Activated T-helper 2 cell treated with anti-CD3 and anti-CD28 coated beads, Interferon-gamma antibody, Interleukin-2, Interleukin-4, amounts not matched to agents 10 μg/mL and 5 μg/mL and 100 μg/mL, durations not matched to agents 14 hours and 24 hours and 36 hours (primary cell): ENCODE measurements at regions of chr18 and their contacts with region 1.

Region 1: DNA sequence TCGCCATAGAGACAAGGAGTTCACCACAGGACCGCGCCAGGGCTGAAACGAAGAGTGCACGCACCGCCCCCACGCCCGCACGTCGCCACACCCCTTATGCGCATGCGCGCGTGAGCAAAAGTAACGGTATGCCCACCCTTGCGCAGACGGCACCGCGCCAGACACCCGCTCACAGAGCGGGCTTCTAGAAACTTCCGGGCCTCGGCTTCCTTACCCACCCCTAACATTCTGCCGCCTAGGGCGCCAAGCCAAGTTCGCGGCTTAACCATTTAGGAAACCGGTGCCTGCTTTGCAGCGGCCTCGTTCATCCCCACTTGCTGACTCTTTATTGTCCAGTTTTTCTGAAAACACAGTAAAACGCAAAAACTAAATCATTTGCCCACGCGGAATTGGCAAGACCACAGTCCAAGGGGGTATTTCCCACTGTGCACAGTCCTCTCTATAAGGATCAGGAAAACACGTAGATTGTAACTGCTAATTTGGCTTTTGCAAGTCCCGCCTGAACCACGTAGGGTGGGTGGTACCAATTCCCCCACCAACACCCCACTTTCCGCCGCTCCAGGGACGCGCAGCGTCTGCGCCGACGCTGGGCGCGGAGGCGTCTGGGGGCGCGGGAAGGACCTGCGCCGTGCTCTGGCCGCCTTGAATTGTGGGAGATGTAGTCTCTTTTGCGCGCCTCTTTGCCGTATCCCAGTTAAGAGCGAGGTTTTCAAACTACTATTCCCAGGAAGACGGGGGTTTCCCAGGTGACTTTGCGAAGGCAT is at the starts of genes FBXO15 and TIMM21:
- DNase-seq: peak; percentile 95
- H3K4me3 Mint-ChIP-seq: peak within 1 kb of the TSS; percentile 99
- H3K27ac Mint-ChIP-seq: peak within 1 kb of the TSS; percentile 98
- H3K4me1 Mint-ChIP-seq: peaks cover 45% of the 10 kb centered on the region
- H3K27me3 Mint-ChIP-seq: peaks cover 4% of the 10 kb centered on the region
- total RNA-seq, gene FBXO15: 0.91 and 1.1 TPM in 2 replicates
- total RNA-seq, gene TIMM21: 48.3 and 50.0 TPM in 2 replicates

Region 2: DNA sequence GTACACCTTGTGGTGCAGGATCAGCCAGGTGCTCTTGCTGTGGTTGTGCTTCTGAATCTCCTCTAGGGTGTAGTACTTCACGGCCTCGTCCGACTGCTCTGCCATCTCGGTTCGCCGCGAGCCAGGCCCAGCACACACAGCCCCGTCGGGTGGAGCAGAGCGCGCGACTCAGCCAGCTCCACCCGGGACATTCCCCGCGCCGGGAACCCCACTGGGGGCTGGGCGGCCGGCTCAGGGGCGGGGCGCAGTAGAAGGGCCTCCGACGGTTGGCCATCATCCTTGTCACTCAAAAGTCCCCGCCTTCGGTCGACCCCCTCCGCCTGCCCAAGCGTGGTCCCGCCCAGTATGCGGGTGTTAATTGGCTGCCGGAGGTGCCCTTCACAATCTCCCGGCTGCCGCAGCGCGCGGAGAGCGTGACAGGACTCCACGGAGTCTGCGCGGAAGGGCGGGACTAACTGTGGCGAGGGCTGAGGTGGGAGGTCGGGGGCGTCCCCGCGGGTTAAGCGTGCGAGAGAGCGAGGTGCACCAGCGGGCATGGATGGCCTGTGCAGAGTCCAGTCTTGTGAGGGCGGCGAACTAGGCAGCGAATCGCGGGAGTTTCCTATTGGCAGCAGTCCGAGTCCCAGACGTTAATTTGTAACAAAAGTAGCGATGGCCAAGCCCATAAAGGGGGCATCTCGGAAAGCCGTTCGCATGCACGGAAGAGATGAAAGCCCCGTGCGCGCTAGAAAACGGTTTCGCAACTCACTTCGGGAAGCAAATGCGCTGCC is 144.0 kb after region 1 on chr18 and contains the start of gene CYB5A:
- intact Hi-C with region 1: loop called (anchors 1 kb)
- DNase-seq: peak; percentile 93
- H3K4me3 Mint-ChIP-seq: peak within 1 kb of the TSS; percentile 94
- H3K27ac Mint-ChIP-seq: peak within 1 kb of the TSS; percentile 78
- H3K4me1 Mint-ChIP-seq: peaks cover 5% of the 10 kb centered on the region
- H3K27me3 Mint-ChIP-seq: peaks cover 15% of the 10 kb centered on the region
- total RNA-seq, gene CYB5A: 36.8 and 37.9 TPM in 2 replicates

Region 3: DNA sequence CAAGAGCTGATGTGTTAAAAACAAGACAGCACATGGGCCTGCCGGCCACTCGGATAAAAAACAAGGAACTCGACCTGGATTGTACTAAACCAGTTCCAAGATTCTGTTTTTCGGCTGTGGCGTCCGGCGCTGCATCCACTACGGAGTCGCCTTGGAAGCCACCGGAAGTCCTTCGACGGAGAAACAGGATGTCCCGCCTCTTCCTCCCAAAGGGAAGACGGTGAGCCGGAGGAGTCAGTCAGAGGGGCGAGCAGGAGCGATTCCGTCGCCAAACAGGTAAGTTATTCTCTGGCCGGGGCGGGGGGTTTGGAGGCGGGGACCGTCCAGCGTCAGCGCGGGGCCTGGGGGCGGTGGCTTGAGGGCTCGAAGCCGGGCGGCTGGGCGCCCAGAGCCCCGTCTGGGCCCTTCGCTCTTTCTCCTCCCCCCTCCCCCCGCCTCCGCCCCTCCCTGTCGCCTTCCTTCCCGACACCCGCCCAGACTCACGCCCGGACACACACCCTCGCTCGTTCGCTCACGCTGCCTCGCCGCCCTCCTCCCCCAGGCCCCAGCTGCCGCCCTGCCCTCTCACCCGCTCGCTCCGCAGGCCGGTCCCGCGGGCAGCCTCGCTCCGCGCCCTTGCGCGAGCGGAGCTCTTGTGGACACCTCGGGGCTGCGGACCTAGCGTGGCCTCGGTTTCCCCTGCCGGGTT is 449.8 kb after region 1 on chr18 and contains the start of gene ZNF407:
- intact Hi-C with region 1: loop called (anchors 2 kb)
- DNase-seq: peak; percentile 85
- H3K4me3 Mint-ChIP-seq: peak within 1 kb of the TSS; percentile 96
- H3K27ac Mint-ChIP-seq: peak within 1 kb of the TSS; percentile 98
- H3K4me1 Mint-ChIP-seq: peaks cover 44% of the 10 kb centered on the region
- H3K27me3 Mint-ChIP-seq: no peaks in the 10 kb centered on the region
- total RNA-seq, gene ZNF407: 18.3 TPM in 2 replicates